CD8-positive, alpha-beta T cell (primary cell): ENCODE measurements at regions of chr4 and their contacts with region 1.

Region 1: GRCh38 chr4:76179398-76180318 is 31.5 kb upstream of the NUP54 start:
- DNase-seq: peak; percentile 61 to 89 (median 82)
- ATAC-seq: peak; percentile 93
- H3K4me3 ChIP-seq: no peak overlapping the region
- H3K4me3 Mint-ChIP-seq: no peak overlapping the region
- H3K27ac ChIP-seq: no peak overlapping the region
- H3K27ac Mint-ChIP-seq: no peak overlapping the region
- H3K4me1 ChIP-seq: no peaks in the 10 kb centered on the region
- H3K4me1 Mint-ChIP-seq: no peaks in the 10 kb centered on the region
- H3K27me3 ChIP-seq: no peaks in the 10 kb centered on the region
- H3K27me3 Mint-ChIP-seq: no peaks in the 10 kb centered on the region
- CTCF ChIP-seq: peak; percentile 93

Region 2: GRCh38 chr4:76206222-76206942 is 26.7 kb after region 1 on chr4:
- CTCF ChIA-PET with region 1: interaction called, 23 read pairs
- POLR2A ChIA-PET with region 1: no interaction called
- intact Hi-C with region 1: no loop called
- DNase-seq: no peak
- ATAC-seq: no peak
- H3K4me3 ChIP-seq: no peak overlapping the region
- H3K4me3 Mint-ChIP-seq: no peak overlapping the region
- H3K27ac ChIP-seq: no peak overlapping the region
- H3K27ac Mint-ChIP-seq: no peak overlapping the region
- H3K4me1 ChIP-seq: peaks cover 1% of the 10 kb centered on the region
- H3K4me1 Mint-ChIP-seq: peaks cover 56% of the 10 kb centered on the region
- H3K27me3 ChIP-seq: no peaks in the 10 kb centered on the region
- H3K27me3 Mint-ChIP-seq: no peaks in the 10 kb centered on the region
- CTCF ChIP-seq: no peak

Region 3: GRCh38 chr4:76246025-76246424 is 66.4 kb after region 1 on chr4:
- CTCF ChIA-PET with region 1: interaction called, 30 read pairs
- POLR2A ChIA-PET with region 1: no interaction called
- intact Hi-C with region 1: loop called in 1 of 2 experiments (anchors 5 kb)
- DNase-seq: no peak
- ATAC-seq: no peak
- H3K4me3 ChIP-seq: no peak overlapping the region
- H3K4me3 Mint-ChIP-seq: no peak overlapping the region
- H3K27ac ChIP-seq: no peak overlapping the region
- H3K27ac Mint-ChIP-seq: no peak overlapping the region
- H3K4me1 ChIP-seq: peaks cover 2% of the 10 kb centered on the region
- H3K4me1 Mint-ChIP-seq: peaks cover 2% of the 10 kb centered on the region
- H3K27me3 ChIP-seq: peaks cover 9 to 10% of the 10 kb centered on the region in 2 experiments
- H3K27me3 Mint-ChIP-seq: peaks cover 40% of the 10 kb centered on the region
- CTCF ChIP-seq: no peak

Region 4: DNA sequence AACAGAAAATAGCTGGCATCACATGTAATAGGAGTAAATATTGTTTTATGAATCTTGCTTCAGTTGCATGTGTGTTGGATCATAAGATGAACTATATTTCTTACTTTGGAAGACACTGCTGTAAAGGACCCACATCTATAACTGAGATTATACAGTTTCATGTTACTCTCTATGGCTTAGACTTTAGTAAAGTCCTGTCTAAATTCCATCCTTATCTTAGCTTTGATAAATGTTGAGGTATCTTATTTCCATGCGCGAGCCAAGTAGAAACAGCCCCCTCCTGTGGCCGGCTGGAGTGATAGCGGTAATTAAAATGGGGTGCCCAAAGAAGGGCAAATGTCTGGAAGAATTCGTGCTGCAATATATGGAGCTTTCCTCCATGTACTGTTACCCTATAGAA is 198.3 kb after region 1 on chr4:
- CTCF ChIA-PET with region 1: interaction called, 72 read pairs
- POLR2A ChIA-PET with region 1: no interaction called
- intact Hi-C with region 1: loop called (anchors 1 kb)
- DNase-seq: peak; percentile 11 to 62 (median 37)
- ATAC-seq: peak; percentile 49
- H3K4me3 ChIP-seq: no peak overlapping the region
- H3K4me3 Mint-ChIP-seq: no peak overlapping the region
- H3K27ac ChIP-seq: no peak overlapping the region
- H3K27ac Mint-ChIP-seq: no peak overlapping the region
- H3K4me1 ChIP-seq: no peaks in the 10 kb centered on the region
- H3K4me1 Mint-ChIP-seq: no peaks in the 10 kb centered on the region
- H3K27me3 ChIP-seq: no peaks in the 10 kb centered on the region
- H3K27me3 Mint-ChIP-seq: no peaks in the 10 kb centered on the region
- CTCF ChIP-seq: peak; percentile 60

Region 5: DNA sequence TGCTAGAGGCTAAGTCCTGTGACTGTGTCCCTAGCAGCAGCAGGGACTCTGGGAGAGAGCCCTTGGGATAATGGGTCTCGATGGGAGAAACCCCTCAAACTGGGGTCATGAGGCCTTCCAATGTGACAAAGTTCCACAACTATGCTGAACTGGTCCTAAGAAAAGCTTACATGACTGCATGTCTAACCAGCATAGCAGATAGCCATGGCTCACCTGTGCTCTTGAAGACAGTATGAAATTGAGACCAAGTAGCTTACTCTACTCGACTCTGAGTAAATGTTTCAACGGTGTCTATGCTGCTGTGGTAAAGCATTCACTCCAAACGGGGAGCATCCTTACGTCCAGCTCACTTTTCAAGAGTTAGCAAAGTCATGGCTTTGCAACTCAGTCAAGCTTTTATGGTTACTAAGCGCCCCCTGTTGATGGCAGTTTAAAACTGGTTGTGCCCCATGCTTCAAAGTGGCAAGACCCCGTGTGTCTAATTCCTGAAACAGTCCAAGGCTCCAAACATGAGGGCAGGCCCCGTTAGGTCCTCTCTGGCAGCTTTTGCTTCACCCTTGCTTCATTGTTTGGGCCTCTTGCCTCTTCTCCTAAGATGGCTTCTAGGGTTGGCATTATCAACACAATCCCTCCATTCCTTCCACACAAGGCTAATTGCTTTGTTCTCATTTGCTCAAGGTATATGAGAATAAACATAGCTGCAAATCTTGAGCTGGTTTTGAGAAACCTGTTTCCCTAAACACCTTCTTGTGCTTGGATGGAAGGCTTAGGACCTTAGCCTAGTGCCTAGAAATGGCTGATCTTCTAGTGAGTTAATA is 1023.9 kb after region 1 on chr4:
- CTCF ChIA-PET with region 1: no interaction called
- POLR2A ChIA-PET with region 1: no interaction called
- intact Hi-C with region 1: loop called in 1 of 2 experiments (anchors 5 kb)
- DNase-seq: peak; percentile 28 to 83 (median 72)
- ATAC-seq: peak; percentile 71
- H3K4me3 ChIP-seq: no peak overlapping the region
- H3K4me3 Mint-ChIP-seq: no peak overlapping the region
- H3K27ac ChIP-seq: no peak overlapping the region
- H3K27ac Mint-ChIP-seq: no peak overlapping the region
- H3K4me1 ChIP-seq: no peaks in the 10 kb centered on the region
- H3K4me1 Mint-ChIP-seq: peaks cover 10% of the 10 kb centered on the region
- H3K27me3 ChIP-seq: no peaks in the 10 kb centered on the region
- H3K27me3 Mint-ChIP-seq: peaks cover 5% of the 10 kb centered on the region
- CTCF ChIP-seq: peak; percentile 75